PC-3 (cell line): ENCODE measurements at regions of chr2 and their contacts with region 1.

Region 1: GRCh38 chr2:185291035-185291647 is 447.5 kb upstream of the FSIP2 start:
- DNase-seq: peak; percentile 79
- ATAC-seq: peak; percentile 100
- H3K4me3 ChIP-seq: no peak overlapping the region
- H3K27ac ChIP-seq: no peak overlapping the region
- H3K4me1 ChIP-seq: no peaks in the 10 kb centered on the region
- H3K27me3 ChIP-seq: no peaks in the 10 kb centered on the region
- CTCF ChIP-seq: peak; percentile 76

Region 2: GRCh38 chr2:185404578-185404977 is 113.4 kb after region 1 on chr2:
- CTCF ChIA-PET with region 1: no interaction called
- POLR2A ChIA-PET with region 1: no interaction called
- intact Hi-C with region 1: loop called (anchors 2 kb)
- DNase-seq: no peak
- ATAC-seq: 0 out of 2 replicates have a peak, but pooled peaks have one; percentile 31
- H3K4me3 ChIP-seq: no peak overlapping the region
- H3K27ac ChIP-seq: no peak overlapping the region
- H3K4me1 ChIP-seq: no peaks in the 10 kb centered on the region
- H3K27me3 ChIP-seq: no peaks in the 10 kb centered on the region
- CTCF ChIP-seq: peak; percentile 44

Region 3: DNA sequence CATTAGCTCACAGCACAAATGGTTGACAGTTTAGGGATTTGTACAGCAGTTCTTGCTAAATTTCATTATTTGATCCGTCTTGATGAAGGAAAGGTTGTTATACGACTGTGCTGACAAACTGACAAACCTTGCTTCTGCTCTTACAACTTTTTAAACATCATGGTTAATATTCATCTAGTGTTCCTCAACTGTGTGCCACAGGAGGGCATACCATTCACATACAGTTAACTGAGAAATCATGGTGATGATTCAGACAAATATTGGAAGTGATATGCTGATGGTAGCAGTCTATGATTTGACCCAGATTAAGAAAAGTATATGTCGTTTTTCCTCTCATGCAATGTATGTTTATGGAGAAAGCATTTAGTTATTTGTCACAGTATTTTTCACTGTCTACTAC is 317.7 kb after region 1 on chr2:
- CTCF ChIA-PET with region 1: no interaction called
- POLR2A ChIA-PET with region 1: no interaction called
- intact Hi-C with region 1: loop called (anchors 5 kb)
- DNase-seq: peak; percentile 71
- ATAC-seq: peak; percentile 64
- H3K4me3 ChIP-seq: no peak overlapping the region
- H3K27ac ChIP-seq: no peak overlapping the region
- H3K4me1 ChIP-seq: peaks cover 3% of the 10 kb centered on the region; the same call in 1 of the 2 replicates
- H3K27me3 ChIP-seq: no peaks in the 10 kb centered on the region
- CTCF ChIP-seq: peak; percentile 72